ENCODE measurements at regions of chr7 and their contacts with region 1.

Region 1: DNA sequence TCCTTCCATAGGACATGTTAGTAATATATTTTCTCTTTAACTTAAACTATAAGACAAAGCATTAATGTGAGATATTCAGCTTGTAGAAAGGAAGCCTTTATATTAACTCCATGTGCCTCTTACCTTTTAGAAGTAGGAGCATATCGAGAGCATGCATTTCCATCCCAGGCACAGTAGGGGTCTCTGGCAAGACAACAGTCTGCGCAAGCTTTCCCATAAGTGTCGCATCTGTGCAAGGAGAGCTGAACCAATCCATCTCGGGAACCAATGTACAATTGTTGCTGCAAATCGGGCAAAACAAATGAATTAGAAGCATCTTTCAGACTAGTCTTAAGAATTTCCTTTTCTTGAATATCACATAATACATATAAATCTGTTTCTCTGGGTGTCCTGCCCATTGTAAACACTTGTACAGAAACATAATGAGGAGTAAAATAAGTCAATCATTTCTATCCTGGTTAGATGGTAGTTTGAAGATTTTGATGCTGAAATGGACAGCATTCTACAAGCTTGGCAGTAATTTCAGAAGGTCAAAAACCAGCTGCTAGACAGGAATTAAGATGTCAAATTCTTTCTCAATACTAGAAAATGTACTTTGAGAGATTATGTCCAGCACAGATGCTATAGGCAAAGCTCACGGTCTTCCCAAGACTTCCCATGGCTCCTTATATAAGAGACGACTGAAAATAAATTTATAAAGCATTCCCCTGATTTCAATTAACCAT is 171.8 kb downstream of the SEMA3D start:
- DNase-seq: no peak
- H3K4me3 Mint-ChIP-seq: no peak overlapping the region
- H3K27ac Mint-ChIP-seq: no peak overlapping the region
- H3K4me1 Mint-ChIP-seq: no peaks in the 10 kb centered on the region
- H3K27me3 Mint-ChIP-seq: peaks cover 5% of the 10 kb centered on the region

Region 2: GRCh38 chr7:84624527-84624926 is 390.6 kb before region 1 on chr7:
- intact Hi-C with region 1: loop called (anchors 10 kb)
- DNase-seq: no peak
- H3K4me3 Mint-ChIP-seq: no peak overlapping the region
- H3K27ac Mint-ChIP-seq: no peak overlapping the region
- H3K4me1 Mint-ChIP-seq: no peaks in the 10 kb centered on the region
- H3K27me3 Mint-ChIP-seq: peaks cover 3% of the 10 kb centered on the region